ENCODE measurements at regions of chr7 and their contacts with region 1.

Region 1: GRCh38 chr7:123367484-123368122 is 166.8 kb downstream of the IQUB start:
- DNase-seq: no peak
- ATAC-seq: no peak
- H3K4me3 ChIP-seq: no peak overlapping the region
- H3K27ac ChIP-seq: no peak overlapping the region
- H3K4me1 ChIP-seq: no peaks in the 10 kb centered on the region
- H3K27me3 ChIP-seq: no peaks in the 10 kb centered on the region
- CTCF ChIP-seq: peak; percentile 44 to 75 (median 63)

Region 2: DNA sequence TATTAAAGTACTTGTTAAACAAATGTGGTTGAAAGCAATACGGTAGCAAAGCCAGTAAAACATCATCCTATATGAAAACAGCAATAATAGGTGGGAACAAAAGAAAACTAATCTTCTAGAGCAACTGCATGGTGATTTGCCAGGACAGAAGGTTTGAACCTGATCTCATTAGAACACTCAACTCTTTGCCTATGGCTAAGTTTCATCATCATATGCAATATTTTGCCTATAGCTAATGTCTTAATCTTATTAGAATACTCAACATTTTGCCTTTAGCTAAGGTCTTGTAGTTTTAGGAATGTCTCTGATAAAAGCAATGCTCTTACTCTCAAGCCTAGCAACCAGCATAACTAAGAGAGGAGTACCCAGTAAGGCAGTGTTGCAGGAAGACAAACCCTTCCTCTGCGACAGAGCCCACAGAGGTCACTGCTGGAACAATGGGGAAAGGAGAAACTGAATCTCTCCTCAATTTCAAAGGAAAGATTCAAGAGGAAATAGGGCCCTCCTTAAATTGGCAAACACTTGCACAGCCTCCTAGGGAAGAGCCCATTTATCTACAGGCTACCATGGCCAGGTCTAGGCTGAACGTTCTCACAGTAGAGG is 519.6 kb before region 1 on chr7:
- intact Hi-C with region 1: no loop called
- DNase-seq: peak in 1 of 2 donors; percentile 28
- ATAC-seq: peak; percentile 57 to 89 (median 80)
- H3K4me3 ChIP-seq: no peak overlapping the region
- H3K27ac ChIP-seq: peak overlapping the region in 9 of 10 donors; percentile 0 to 79 (median 55)
- H3K4me1 ChIP-seq: peaks cover 3 to 48% (median 20%) of the 10 kb centered on the region in 9 donors
- H3K27me3 ChIP-seq: no peaks in the 10 kb centered on the region
- CTCF ChIP-seq: no peak

Region 3: GRCh38 chr7:123208793-123209192 is 158.8 kb before region 1 on chr7:
- intact Hi-C with region 1: loop called in 4 of 10 experiments (anchors 5 to 10 kb)
- DNase-seq: no peak
- ATAC-seq: peak in 2 of 8 donors; percentile 22 to 29
- H3K4me3 ChIP-seq: no peak overlapping the region
- H3K27ac ChIP-seq: no peak overlapping the region
- H3K4me1 ChIP-seq: peaks cover 0 to 14% (median 0%) of the 10 kb centered on the region in 9 donors
- H3K27me3 ChIP-seq: no peaks in the 10 kb centered on the region
- CTCF ChIP-seq: peak in 7 of 9 donors; percentile 15 to 51 (median 30)

Region 4: GRCh38 chr7:123259759-123260158 is 107.8 kb before region 1 on chr7:
- intact Hi-C with region 1: no loop called
- DNase-seq: no peak
- ATAC-seq: no peak
- H3K4me3 ChIP-seq: no peak overlapping the region
- H3K27ac ChIP-seq: no peak overlapping the region
- H3K4me1 ChIP-seq: peaks cover 0 to 9% (median 0%) of the 10 kb centered on the region in 9 donors
- H3K27me3 ChIP-seq: no peaks in the 10 kb centered on the region
- CTCF ChIP-seq: no peak

Region 5: GRCh38 chr7:123425246-123425645 is 57.6 kb after region 1 on chr7:
- intact Hi-C with region 1: no loop called
- DNase-seq: no peak
- ATAC-seq: no peak
- H3K4me3 ChIP-seq: no peak overlapping the region
- H3K27ac ChIP-seq: no peak overlapping the region
- H3K4me1 ChIP-seq: no peaks in the 10 kb centered on the region
- H3K27me3 ChIP-seq: no peaks in the 10 kb centered on the region
- CTCF ChIP-seq: no peak

Region 6: DNA sequence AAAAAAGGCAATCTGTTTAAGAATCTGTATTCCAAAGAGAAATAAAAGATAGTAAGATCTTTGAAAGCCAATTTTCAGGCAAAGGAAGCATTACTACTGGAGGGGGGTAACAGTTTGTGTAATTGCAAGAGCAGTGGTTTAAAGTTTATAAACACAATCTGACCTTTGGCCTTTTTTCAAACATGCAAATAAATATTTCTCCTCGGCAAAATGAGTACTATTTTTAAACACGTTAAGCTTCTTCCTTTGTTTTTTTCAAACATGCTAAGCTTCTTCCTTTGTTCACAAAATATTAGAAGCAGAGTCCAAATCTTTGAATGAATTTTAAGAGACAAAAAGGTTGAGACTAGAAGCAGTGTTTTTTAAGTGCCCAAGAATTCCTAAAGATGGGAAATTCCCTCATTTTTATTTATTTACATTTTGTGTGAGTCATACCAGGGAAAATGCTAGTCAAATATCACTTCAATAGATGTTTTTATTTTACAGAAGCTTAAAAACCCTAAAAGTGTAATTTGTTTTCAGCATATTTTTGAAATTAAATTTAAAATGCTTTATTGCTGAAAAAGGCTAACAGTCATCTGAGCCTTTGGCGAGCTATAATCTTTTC is 1168.7 kb after region 1 on chr7:
- intact Hi-C with region 1: no loop called
- DNase-seq: no peak
- ATAC-seq: no peak
- H3K4me3 ChIP-seq: no peak overlapping the region
- H3K27ac ChIP-seq: no peak overlapping the region
- H3K4me1 ChIP-seq: no peaks in the 10 kb centered on the region
- H3K27me3 ChIP-seq: no peaks in the 10 kb centered on the region
- CTCF ChIP-seq: no peak

Measured in heart right ventricle (tissue), 16 donors.